Common myeloid progenitor, CD34-positive (primary cell): ENCODE measurements at regions of chr9 and their contacts with region 1.

Region 1: DNA sequence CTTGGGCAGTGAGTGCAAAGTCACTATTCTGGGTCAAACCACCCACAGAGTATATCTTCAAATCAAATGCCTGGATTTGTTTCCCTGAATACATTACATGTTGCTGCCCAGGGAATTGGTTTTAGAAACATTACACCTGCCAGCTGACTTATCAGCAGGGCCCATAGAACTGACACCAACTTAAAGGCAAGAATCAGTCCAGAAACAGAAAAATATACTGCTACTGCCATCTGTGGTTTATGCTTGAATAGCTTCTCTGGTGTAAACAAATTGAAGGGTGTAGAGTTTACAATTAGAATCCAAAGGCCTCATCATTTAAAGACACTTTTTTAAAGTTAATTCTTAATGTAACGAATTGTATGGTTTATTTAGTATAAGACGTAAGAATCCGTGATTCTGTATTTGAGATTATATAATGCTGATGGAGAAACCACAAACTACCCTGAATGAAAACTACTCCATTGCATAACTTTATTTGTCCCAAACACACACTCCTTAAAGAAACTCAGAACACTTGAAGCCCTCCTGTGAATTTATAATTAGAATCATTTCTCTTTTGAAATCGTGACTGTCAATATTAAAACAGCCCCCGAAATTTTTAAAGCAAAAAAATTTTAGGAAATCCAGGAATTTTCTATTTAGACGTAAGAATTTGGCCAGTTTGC is 6.2 kb downstream of the NR6A1 start:
- DNase-seq: peak in 2 of 3 donors; percentile 63 to 71
- H3K4me3 ChIP-seq: no peak overlapping the region
- H3K27ac ChIP-seq: no peak overlapping the region
- H3K4me1 ChIP-seq: peaks cover 13 to 61% (median 42%) of the 10 kb centered on the region in 4 experiments
- H3K27me3 ChIP-seq: no peaks in the 10 kb centered on the region

Region 2: GRCh38 chr9:124694414-124695279 is 70.3 kb before region 1 on chr9:
- CTCF ChIA-PET with region 1: no interaction called
- POLR2A ChIA-PET with region 1: no interaction called
- DNase-seq: no peak
- H3K4me3 ChIP-seq: no peak overlapping the region
- H3K27ac ChIP-seq: no peak overlapping the region
- H3K4me1 ChIP-seq: peaks cover 0 to 9% (median 3%) of the 10 kb centered on the region in 4 experiments
- H3K27me3 ChIP-seq: no peaks in the 10 kb centered on the region

Region 3: DNA sequence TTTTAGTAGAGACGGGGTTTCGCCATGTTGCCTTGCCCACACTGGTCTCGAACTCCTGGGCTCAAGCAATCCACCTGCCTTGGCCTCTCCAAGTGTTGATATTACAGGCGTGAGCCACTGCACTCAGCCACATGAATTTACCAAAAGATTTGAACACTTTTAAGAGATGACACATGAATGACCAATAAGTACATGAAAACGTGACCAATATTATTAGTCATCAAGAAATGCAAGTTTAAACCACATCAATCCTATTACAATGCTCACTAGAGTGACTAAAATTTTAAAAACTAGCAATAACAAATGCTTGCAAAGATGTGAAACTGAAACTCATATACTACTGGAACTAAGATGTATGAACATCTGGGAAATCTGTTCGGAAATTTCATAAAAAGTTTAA is 48.1 kb before region 1 on chr9:
- CTCF ChIA-PET with region 1: interaction called, 96 read pairs
- POLR2A ChIA-PET with region 1: no interaction called
- DNase-seq: no peak
- H3K4me3 ChIP-seq: no peak overlapping the region
- H3K27ac ChIP-seq: no peak overlapping the region
- H3K4me1 ChIP-seq: peaks cover 0 to 7% (median 0%) of the 10 kb centered on the region in 4 experiments
- H3K27me3 ChIP-seq: no peaks in the 10 kb centered on the region

Region 4: DNA sequence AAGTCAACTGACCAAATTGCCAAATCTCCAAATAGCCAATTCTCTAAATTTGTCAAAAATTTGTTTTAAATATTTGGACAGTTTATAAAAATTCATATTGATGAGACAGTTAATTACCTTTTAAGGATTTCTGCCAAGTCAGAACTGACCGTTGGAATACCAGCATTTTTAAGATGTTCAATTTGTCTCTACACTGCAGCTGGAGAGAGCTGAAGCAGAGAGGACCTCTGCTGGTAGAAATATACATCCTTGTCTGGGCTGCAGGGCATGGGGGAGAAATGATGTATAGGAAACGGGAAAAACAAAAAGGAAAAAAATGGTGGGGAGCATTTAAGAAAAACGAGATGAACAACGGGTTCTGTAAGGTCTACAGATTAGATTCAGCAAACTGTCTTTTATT is 10.6 kb before region 1 on chr9:
- CTCF ChIA-PET with region 1: interaction called, 24 read pairs
- POLR2A ChIA-PET with region 1: no interaction called
- DNase-seq: no peak
- H3K4me3 ChIP-seq: no peak overlapping the region
- H3K27ac ChIP-seq: no peak overlapping the region
- H3K4me1 ChIP-seq: peaks cover 22 to 44% (median 34%) of the 10 kb centered on the region in 4 experiments
- H3K27me3 ChIP-seq: no peaks in the 10 kb centered on the region